Lower leg skin (tissue), 4 donors: ENCODE measurements at regions of chr10 and their contacts with region 1.

Region 1: DNA sequence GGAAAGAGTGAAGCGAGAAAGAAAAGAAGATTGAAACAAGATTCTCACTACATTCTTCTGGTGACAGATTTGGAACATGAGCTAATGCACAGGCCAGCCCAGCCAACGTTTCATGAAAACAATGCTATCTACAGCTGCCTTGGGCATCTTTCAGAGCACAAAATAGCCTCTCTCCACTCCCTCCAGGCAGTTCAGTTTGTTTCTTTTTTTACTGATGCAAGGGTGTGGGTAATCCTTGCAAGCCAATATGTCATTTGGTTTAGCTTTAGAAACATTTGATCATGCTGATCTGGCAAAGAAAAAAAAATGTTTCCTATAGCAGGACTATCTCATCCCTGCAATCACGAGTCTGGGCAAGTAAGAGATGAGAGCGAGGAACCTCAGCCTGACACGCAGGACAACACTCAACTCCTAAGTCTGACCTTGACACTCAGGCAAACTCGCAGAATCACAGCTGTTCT is 35.9 kb downstream of the SVIL start:
- DNase-seq: peak; percentile 53 to 84
- H3K4me3 ChIP-seq: no peak overlapping the region
- CTCF ChIP-seq: no peak
- POLR2A ChIP-seq: no peak

Region 2: DNA sequence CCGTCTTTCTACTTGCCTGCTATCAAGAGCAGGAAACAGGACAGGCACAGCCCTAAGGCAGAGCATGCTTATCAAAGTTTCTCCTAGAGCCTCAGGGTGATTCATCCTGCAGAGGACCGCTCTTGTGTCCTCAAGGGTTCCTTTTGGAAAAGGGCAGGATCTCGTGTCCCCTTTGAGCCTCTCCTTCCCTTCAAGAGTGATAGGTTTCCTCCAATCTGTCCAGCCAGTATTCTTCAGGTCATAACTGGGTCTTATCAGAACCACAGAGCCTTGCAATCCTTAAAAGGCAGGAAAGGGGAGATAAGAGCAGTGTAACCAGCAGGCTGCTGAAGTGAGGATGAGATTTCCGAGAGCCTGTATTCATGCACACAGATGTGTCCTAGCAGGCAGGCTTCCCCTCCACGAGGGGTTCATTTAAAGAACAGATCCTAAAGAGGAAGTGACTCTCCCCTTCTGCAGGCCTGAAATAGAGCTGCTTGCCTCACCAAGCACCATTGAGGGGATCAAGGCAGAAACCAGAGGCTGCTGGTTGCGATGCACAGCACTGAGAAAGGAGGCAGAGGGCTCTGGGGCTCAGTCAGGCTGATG is 126.3 kb after region 1 on chr10:
- intact Hi-C with region 1: loop called (anchors 10 kb)
- DNase-seq: no peak
- H3K4me3 ChIP-seq: no peak overlapping the region
- CTCF ChIP-seq: no peak
- POLR2A ChIP-seq: no peak